Heart left ventricle (tissue), 16 donors: ENCODE measurements at regions of chr9 and their contacts with region 1.

Region 1: DNA sequence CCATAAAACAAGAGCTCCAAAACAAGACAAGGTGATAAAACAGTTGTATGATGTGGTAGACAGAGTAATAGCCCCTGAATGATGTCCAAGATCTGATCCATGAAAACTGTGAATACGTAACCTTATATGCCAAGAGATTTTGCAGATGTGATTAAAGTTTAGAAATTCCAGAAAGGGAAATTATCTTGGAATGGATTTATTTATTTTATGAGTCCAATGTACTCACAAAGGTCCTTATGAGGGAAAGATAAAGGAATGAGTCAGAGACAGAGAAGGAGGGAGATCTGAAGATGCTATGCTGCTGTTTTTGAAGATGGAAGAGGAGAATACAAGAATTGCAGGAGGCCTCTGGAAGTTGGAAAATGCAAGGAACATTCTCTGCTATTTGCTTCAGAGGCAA is 1775.8 kb upstream of the C9orf72 start:
- DNase-seq: no peak
- ATAC-seq: no peak
- H3K4me3 ChIP-seq: no peak overlapping the region
- H3K27ac ChIP-seq: no peak overlapping the region
- H3K4me1 ChIP-seq: no peaks in the 10 kb centered on the region
- H3K27me3 ChIP-seq: no peaks in the 10 kb centered on the region
- CTCF ChIP-seq: no peak
- POLR2A ChIP-seq: no peak

Region 2: GRCh38 chr9:29397148-29397547 is 48.1 kb after region 1 on chr9:
- intact Hi-C with region 1: loop called in 1 of 10 experiments (anchors 10 kb)
- DNase-seq: no peak
- ATAC-seq: no peak
- H3K4me3 ChIP-seq: no peak overlapping the region
- H3K27ac ChIP-seq: no peak overlapping the region
- H3K4me1 ChIP-seq: no peaks in the 10 kb centered on the region
- H3K27me3 ChIP-seq: no peaks in the 10 kb centered on the region
- CTCF ChIP-seq: no peak
- POLR2A ChIP-seq: no peak